ENCODE measurements at regions of chr15 and their contacts with region 1.

Region 1: DNA sequence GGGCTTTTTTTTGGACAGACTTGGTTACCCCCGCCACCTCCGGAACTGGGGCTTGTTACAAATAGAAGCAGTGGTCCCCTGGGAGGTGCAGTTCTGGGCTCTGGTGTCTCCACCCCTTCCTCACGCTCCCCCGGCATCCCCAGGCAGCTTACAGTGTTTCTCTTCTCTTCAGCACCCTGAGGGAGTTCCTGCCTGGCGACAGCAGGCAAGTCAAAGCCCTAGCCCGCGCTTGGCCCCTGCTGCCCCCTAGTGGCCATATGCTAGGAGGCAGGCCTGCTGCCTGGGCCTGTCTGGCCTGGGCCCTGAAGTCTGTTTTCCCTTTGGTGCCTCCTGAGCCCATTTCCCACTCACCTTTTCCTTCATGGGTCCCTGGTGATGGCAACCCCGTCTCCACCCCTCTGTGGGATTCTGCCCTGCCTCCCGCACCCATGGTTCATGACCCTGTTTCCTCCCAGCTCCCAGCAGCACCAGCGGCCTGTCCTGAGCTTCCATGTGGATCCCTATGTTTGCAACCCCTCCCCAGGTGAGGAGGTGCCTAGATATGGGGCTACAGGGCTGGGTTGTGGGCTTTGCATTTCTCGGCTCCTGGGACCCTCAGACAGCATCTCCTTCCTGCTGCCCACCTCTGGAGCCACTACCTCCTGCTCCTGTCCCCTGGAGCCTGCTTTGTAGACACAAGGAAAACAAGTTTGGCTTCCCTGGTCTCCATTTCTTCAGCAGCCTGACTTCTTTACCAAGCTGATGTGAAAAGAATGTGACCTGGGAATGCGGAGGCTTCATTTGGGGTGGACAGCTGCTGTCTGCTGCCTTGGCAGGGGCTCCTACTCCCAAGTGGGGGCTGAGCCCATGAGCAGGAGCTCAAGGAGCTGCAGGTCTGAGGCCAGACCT is 2.2 kb downstream of the SNX22 start:
- DNase-seq: peak; percentile 94
- H3K4me3 ChIP-seq: no peak overlapping the region
- H3K27ac ChIP-seq: no peak overlapping the region
- H3K4me1 ChIP-seq: peaks cover 12% of the 10 kb centered on the region
- H3K27me3 ChIP-seq: peaks cover 14% of the 10 kb centered on the region
- CTCF ChIP-seq: peak; percentile 98

Region 2: DNA sequence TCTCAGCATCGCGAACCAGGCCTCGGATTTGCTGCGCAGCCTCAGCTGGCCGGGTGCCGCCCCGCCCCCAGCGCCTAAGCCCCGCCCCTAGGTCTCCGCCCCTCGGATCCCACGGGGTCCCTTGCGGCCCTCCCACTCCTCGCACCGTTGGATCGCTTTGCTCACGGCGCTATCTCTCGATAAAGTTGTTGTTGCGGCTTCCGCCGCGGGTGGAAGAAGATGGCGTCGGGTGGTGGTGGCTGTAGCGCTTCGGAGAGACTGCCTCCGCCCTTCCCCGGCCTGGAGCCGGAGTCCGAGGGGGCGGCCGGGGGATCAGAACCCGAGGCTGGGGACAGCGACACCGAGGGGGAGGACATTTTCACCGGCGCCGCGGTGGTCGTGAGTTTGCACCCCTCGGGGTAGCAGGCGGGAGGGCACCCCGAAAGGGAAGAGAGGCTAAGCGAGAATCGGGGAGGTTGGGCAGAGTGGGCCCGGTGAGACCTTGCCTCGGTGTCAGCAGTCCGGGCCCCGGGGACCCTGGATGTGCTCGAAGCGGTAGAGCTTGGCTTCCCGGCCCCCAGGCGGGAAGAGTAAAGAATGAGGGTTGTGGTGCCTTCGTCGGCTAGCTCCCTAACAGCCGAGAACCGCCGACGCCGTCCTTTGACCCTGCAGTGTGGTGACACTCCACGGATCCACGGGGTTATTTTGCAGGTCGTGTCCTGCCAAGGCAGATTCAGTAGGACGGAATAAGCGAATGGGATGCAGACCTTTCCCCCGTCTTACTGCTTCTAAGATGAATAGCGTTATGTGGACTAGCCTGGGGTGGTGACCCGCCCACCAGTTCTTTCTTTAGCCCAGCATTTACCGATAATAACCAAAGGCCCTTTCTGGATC is 57.7 kb before region 1 on chr15 and contains the start of gene SNX1:
- intact Hi-C with region 1: loop called (anchors 5 kb)
- DNase-seq: peak; percentile 95
- H3K4me3 ChIP-seq: peak within 1 kb of the TSS; percentile 66
- H3K27ac ChIP-seq: peak within 1 kb of the TSS; percentile 46
- H3K4me1 ChIP-seq: peaks cover 22% of the 10 kb centered on the region
- H3K27me3 ChIP-seq: no peaks in the 10 kb centered on the region
- CTCF ChIP-seq: no peak
- total RNA-seq, gene SNX1: 116 to 125 TPM

Region 3: DNA sequence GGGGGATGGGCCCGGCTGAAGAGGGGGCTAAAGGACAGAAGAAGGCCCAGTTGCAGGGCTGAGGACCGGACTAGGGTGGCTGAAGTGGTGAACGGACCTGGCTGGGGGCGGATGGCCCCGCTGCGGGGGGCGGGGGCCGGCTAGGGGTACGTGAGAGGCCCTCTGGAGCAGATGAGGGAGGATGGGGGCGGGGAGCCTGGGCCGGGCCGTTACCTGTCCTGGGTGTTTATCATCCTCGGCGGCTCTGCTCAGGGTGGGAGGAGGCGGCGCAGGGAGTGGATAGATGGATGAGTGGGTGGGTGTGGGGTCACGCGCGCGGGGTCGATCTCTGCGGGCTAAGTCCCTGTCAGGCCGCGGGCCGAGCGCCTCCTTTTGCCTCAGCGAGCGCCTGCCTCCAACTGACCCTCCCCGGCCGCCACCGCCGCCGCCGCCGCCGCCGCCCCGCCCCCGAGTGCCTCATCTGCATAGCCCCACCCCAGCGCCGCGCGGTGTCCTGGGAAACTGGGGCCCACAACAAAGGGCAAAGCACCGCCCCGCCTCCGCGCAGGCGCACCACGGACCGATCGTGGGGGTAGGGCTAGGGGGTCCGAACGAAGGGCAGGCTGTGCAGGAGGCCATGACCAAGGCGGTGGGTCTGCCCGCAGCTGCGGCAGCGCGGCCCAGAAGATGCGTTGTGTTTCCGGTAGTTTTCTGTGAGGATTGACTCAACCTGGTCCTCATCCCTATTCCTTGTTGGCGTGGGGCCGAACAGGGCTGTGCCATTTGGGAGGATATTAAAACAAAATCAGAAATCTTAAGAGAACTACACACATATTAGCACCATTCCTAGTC is 549.3 kb after region 1 on chr15:
- intact Hi-C with region 1: no loop called
- DNase-seq: peak; percentile 98
- H3K4me3 ChIP-seq: peak overlapping the region; percentile 80
- H3K27ac ChIP-seq: peak overlapping the region; percentile 53
- H3K4me1 ChIP-seq: no peaks in the 10 kb centered on the region
- H3K27me3 ChIP-seq: no peaks in the 10 kb centered on the region
- CTCF ChIP-seq: no peak